ENCODE measurements at regions of chr17 and their contacts with region 1.

Region 1: DNA sequence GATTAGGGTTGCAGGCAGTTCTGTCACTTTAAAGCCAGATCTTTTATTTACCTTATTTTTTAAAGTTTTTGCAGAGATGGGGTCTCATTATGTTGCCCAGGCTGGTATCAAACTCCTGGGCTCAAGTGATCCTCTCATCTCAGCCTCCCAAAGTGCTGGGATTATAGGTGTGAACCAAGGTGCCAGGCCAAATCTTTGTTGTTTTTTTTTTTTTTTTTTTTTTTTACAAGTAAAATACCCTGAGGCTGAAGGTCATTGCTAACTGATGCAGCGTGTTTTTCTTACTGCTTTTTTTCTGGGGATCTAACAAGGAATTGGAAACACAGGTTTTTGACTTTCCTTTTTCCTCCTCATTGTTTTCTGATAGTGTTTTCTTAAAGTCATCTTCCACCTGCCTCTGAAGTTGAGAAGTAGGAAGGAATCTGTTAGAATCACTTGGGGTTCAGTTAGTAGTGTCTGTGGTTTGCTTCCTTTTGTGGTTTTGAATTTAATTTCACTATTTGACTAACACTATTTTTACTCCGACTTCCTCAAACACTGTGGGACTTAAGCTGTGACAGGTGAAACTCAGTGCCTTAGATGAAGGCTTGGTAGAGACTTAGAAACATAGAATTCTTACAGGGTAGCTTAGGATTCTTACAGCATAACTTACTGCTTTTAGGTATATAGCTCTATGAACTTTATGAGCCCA is 22.2 kb downstream of the CLTC start:
- DNase-seq: no peak
- ATAC-seq: no peak
- H3K4me3 ChIP-seq: no peak overlapping the region
- H3K27ac ChIP-seq: peak overlapping the region; percentile 66 to 77 (median 74)
- H3K4me1 ChIP-seq: peaks cover 54 to 71% of the 10 kb centered on the region in 2 donors
- H3K27me3 ChIP-seq: no peaks in the 10 kb centered on the region
- CTCF ChIP-seq: no peak
- POLR2A ChIP-seq: no peak

Region 2: GRCh38 chr17:59707114-59707970 is 65.4 kb after region 1 on chr17 and contains the starts of genes PTRH2 and VMP1:
- in situ Hi-C with region 1: no loop called
- intact Hi-C with region 1: loop called (anchors 5 kb)
- DNase-seq: peak; percentile 98 to 99
- ATAC-seq: peak; percentile 96 to 98
- H3K4me3 ChIP-seq: peak within 1 kb of the TSS; percentile 65 to 90 (median 85)
- H3K27ac ChIP-seq: peak within 1 kb of the TSS; percentile 94 to 96 (median 96)
- H3K4me1 ChIP-seq: peaks cover 35 to 37% of the 10 kb centered on the region in 2 donors
- H3K27me3 ChIP-seq: no peaks in the 10 kb centered on the region
- CTCF ChIP-seq: no peak
- POLR2A ChIP-seq: peak; percentile 88 to 90
- total RNA-seq, gene PTRH2: 17.4 to 18.7 (median 18.1) TPM
- total RNA-seq, gene VMP1: 39.2 to 55.0 (median 48.4) TPM

Measured in gastrocnemius medialis (tissue), 4 donors.